A549 (cell line): ENCODE measurements at regions of chr15 and their contacts with region 1.

Region 1: DNA sequence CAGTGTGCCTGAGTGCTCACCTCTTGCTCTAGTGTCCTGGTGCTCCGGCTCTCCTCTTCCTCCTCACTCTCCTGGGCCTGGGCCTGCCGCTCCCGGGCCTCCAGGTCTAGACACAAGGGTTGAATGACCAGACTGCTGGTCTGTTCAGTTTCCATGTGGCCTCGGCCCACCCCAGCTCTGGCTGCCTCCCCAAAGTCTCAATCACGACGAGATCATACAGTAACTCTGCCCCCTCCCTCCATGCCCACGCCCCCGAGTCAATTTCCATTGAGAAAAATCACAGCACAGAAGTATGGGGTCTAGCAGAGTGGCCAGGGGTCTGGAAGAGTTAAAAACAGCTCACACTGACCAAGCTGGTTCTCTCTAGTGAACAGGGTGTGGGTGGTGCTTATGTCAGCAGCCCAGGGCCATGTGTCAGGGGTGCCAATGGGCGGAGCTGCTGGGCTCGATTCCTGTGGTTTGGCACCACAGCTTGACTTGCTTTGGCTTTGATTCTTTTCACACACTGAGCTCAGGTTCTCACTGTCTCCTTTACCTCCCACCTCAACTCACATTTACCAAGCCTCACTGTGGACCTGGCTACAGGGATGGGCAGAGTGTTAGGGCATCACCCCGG is 6.8 kb downstream of the C15orf62 start:
- DNase-seq: no peak
- ATAC-seq: no peak
- H3K4me3 ChIP-seq: no peak overlapping the region
- H3K27ac ChIP-seq: no peak overlapping the region
- H3K4me1 ChIP-seq: no peaks in the 10 kb centered on the region
- CTCF ChIP-seq: no peak
- EP300 ChIP-seq: no peak
- POLR2A ChIP-seq: no peak
- RAD21 ChIP-seq: no peak

Region 2: DNA sequence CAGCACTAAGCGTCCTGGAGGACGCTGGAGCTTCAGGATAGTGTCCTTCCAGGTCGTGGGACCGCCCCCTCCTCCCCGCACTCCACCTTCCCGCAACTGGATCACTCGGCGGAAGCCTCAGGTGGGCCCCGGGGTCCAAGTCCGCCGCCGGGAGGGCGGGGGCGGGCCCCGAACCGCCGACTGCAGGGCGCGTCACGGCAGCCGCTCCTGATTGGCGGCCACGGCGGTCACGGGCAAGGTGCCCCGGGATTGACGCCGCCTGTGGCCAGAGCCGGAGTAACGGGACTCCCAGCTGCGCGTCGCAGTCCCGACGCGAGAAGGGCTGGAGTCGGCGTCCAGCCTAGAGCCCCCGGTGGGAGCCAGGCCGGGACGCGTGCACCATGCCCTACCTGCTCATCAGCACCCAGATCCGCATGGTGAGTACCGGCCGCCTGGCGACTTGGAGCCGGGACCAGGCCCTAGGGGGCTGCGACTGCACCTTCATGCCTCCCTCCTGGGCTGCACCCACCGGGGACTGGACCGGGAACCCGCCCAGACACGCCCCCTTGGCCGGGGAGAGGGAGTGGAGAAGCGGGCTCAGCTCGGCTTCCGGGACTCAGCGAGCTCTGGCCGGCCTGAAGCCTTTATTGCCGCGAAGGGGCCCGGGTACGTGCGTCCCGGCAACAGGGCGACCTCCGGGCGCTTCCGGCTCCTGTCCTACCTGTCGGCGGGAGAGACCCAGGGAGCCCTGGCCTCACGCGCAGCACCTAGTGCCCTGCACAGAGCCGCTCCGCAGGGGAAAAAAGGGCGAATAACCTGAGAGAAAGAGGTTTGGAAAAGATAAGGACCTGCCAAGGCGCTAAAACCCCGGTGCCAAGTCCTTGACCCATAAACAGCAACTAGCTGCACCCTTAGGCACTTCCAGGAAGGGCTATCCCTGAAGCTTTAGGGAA is 12.6 kb before region 1 on chr15 and contains the start of gene GCHFR:
- CTCF ChIA-PET with region 1: interaction called, 40 read pairs
- POLR2A ChIA-PET with region 1: no interaction called
- DNase-seq: peak; percentile 67 to 73
- ATAC-seq: peak; percentile 78 to 86
- H3K4me3 ChIP-seq: peak within 1 kb of the TSS; percentile 59
- H3K27ac ChIP-seq: peak within 1 kb of the TSS; percentile 74 to 89
- H3K4me1 ChIP-seq: peaks cover 14% of the 10 kb centered on the region; the same call in 2 of the 3 replicates
- CTCF ChIP-seq: peak; percentile 20; the same call in 1 of the 3 replicates
- EP300 ChIP-seq: no peak
- POLR2A ChIP-seq: 0 out of 2 replicates have a peak, but pooled peaks have one; percentile 6
- RAD21 ChIP-seq: no peak
- polyA plus RNA-seq, gene GCHFR: 6.9 and 7.7 TPM in 2 replicates

Region 3: GRCh38 chr15:40819048-40819447 is 42.4 kb after region 1 on chr15:
- CTCF ChIA-PET with region 1: no interaction called
- POLR2A ChIA-PET with region 1: no interaction called
- DNase-seq: no peak
- ATAC-seq: no peak
- H3K4me3 ChIP-seq: no peak overlapping the region
- H3K27ac ChIP-seq: no peak overlapping the region
- H3K4me1 ChIP-seq: peaks cover 8% of the 10 kb centered on the region; the same call in 2 of the 3 replicates
- CTCF ChIP-seq: no peak
- EP300 ChIP-seq: no peak
- POLR2A ChIP-seq: no peak
- RAD21 ChIP-seq: no peak